Cardiac septum (tissue), 1 donor: ENCODE measurements at regions of chr7 and their contacts with region 1.

Region 1: GRCh38 chr7:876167-876967 is at the start of gene GET4:
- DNase-seq: peak; percentile 99
- total RNA-seq, gene GET4: 21.3 TPM

Region 2: DNA sequence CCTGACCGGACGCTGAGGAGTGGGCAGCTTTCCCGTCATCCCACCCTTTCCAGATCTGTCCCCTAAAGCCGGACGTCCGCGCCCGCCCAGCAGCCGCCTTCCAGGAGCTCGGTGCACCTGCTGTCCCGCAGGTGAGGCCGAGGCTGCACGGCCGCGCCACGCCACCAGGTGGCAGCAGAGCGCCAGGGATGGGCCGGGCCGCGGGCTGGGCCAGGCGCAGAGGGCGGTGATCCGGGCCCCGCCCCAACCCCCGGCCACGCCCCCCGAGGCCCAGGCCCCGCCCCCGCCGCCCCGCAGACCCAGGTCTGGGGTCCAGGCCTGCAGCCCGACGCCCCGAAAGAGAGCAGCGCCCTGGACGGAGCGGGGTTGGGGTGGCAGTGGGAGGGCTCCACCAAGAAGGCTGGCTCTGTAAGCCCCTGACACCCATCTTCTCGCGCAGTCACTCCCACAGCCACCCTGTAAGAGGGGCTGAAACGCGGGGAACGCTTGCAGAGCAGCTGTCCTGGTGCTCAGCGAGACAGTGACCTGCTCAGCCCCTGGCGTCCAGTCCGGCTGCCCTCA is 554.2 kb before region 1 on chr7:
- intact Hi-C with region 1: loop called (anchors 10 kb)
- DNase-seq: peak; percentile 87

Region 3: GRCh38 chr7:786472-787255 is 89.7 kb before region 1 on chr7:
- intact Hi-C with region 1: loop called (anchors 2 kb)
- DNase-seq: no peak

Region 4: DNA sequence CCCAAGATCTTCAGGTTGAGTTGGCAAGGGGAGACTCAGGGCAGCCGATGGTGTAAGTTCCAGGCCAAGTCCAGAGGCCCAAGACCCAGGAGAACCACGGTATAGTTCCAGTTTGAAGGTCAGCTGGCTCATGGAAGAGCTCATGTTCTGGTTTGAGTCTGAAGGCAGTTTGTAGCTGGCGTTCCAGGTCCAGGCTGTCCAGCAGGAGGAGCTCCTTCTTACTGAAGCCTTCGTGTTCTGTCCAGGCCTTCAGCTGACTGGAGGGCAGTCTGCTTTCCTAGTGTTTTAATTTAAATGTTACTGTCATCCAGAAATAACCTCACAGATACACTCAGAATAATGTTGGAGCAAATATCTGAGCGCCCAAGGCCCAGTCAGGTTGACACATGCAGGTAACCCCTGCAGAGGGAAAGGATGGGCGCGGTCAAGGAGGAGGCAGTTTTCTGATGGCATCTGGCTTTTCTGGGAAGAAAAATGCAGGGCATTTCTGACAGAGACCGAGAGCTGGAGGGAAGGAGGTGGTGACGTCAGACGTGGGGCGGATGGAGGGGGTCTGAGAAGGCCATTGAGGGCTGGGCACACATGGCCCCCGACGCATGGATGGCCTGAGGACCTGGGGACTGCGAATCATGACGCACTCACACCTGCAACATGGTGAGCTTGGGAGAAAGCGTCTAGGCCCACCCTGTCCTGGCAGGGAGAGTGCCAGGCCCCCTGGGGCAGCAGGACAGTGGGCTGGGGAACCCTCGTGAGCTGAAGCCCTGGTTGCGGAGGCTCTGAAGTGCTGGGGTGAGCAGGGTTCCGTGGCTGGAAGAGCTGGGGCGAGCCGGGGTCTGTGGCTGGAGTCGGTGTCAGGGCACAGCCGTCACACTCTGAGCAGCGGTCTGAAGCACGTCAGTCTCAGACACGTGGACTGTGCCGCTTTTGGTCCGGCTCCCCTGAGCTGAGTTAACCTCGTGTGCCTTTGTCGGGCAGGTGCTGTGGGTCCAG is 39.7 kb before region 1 on chr7:
- intact Hi-C with region 1: loop called (anchors 5 kb)
- DNase-seq: no peak